CD8-positive, alpha-beta T cell (primary cell): ENCODE measurements at regions of chr2 and their contacts with region 1.

Region 1: DNA sequence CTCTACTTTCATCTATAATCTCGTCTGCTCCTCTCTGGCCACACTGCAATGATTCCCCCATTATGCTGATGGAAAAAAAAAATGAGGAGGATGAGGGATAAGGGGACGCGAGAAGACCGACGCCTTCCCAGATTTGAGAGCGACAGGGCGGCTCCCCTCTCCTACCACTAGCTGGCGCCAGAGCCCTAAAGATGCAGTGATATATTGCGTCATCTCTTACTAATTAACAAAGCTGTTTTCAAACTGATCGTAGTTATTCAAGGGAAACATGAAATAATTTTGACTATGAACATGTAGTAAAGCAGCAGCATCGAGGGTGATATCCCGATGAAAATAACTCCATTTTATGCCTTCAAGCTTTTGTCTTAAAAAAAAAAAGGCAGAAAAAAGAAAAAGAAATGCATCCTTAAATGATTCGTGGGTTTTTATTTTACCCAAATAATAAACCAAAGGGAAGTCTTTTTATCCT is 48.0 kb upstream of the HNRNPA3 start:
- DNase-seq: peak; percentile 58 to 87 (median 82)
- ATAC-seq: peak; percentile 74
- H3K4me3 ChIP-seq: peak overlapping the region; percentile 29 to 36
- H3K4me3 Mint-ChIP-seq: no peak overlapping the region
- H3K27ac ChIP-seq: peak overlapping the region in 1 of 2 experiments; percentile 28
- H3K27ac Mint-ChIP-seq: no peak overlapping the region
- H3K4me1 ChIP-seq: peaks cover 23% of the 10 kb centered on the region
- H3K4me1 Mint-ChIP-seq: peaks cover 14% of the 10 kb centered on the region
- H3K27me3 ChIP-seq: no peaks in the 10 kb centered on the region
- H3K27me3 Mint-ChIP-seq: peaks cover 3% of the 10 kb centered on the region
- CTCF ChIP-seq: peak; percentile 100

Region 2: DNA sequence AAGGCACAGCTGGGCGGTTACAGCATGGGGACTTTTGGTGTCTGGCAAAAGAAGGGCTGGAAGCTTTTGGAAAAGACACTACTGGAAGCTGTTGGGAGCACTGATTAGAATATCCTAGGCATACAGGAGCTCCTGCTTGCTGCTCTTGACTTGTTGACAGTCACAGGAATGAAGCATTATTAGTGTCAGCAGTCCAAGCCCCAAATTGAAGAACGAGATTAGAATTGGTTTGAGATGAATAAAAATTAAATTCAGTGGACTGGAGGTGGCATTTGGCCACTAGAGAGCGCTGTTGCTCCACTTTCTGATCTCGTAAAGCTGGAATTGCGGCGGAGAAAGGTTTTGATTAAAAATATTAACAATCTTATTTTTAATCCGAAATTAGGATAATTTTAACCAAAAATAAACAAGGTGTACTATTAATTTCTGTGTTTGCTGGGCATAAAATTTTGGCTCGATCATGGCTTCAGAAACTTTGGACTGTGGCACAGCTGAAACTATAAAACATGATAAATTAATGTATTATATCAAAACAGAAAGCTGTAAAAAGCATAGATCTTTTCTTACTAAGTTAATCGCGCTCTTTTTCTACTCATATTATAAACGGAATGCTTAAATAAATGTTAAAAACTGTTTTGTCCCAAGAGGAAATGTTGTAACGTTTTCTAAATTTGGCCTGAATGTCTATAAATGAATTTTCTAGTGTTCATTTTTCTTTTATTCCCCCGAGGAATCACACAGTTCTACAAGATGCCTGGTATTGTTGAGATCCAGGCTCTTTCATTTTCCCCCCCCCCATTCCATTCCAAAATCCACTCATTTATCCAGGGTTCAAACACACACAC is 1037.5 kb before region 1 on chr2:
- CTCF ChIA-PET with region 1: interaction called, 8 read pairs
- POLR2A ChIA-PET with region 1: no interaction called
- intact Hi-C with region 1: loop called (anchors 1 kb)
- DNase-seq: peak; percentile 36 to 81 (median 74)
- ATAC-seq: no peak
- H3K4me3 ChIP-seq: no peak overlapping the region
- H3K4me3 Mint-ChIP-seq: no peak overlapping the region
- H3K27ac ChIP-seq: no peak overlapping the region
- H3K27ac Mint-ChIP-seq: no peak overlapping the region
- H3K4me1 ChIP-seq: peaks cover 36% of the 10 kb centered on the region
- H3K4me1 Mint-ChIP-seq: peaks cover 31% of the 10 kb centered on the region
- H3K27me3 ChIP-seq: peaks cover 68 to 72% of the 10 kb centered on the region in 2 experiments
- H3K27me3 Mint-ChIP-seq: peaks cover 71% of the 10 kb centered on the region
- CTCF ChIP-seq: peak; percentile 99

Region 3: GRCh38 chr2:177195194-177195593 is 30.6 kb after region 1 on chr2:
- CTCF ChIA-PET with region 1: interaction called, 21 read pairs
- POLR2A ChIA-PET with region 1: no interaction called
- intact Hi-C with region 1: no loop called
- DNase-seq: peak in 1 of 9 experiments; percentile 30
- ATAC-seq: no peak
- H3K4me3 ChIP-seq: no peak overlapping the region
- H3K4me3 Mint-ChIP-seq: no peak overlapping the region
- H3K27ac ChIP-seq: no peak overlapping the region
- H3K27ac Mint-ChIP-seq: no peak overlapping the region
- H3K4me1 ChIP-seq: no peaks in the 10 kb centered on the region
- H3K4me1 Mint-ChIP-seq: no peaks in the 10 kb centered on the region
- H3K27me3 ChIP-seq: no peaks in the 10 kb centered on the region
- H3K27me3 Mint-ChIP-seq: no peaks in the 10 kb centered on the region
- CTCF ChIP-seq: no peak

Region 4: GRCh38 chr2:177229448-177230242 is 65.0 kb after region 1 on chr2:
- CTCF ChIA-PET with region 1: interaction called, 18 read pairs
- POLR2A ChIA-PET with region 1: no interaction called
- intact Hi-C with region 1: no loop called
- DNase-seq: no peak
- ATAC-seq: no peak
- H3K4me3 ChIP-seq: no peak overlapping the region
- H3K4me3 Mint-ChIP-seq: no peak overlapping the region
- H3K27ac ChIP-seq: no peak overlapping the region
- H3K27ac Mint-ChIP-seq: peak overlapping the region; percentile 79
- H3K4me1 ChIP-seq: no peaks in the 10 kb centered on the region
- H3K4me1 Mint-ChIP-seq: peaks cover 41% of the 10 kb centered on the region
- H3K27me3 ChIP-seq: no peaks in the 10 kb centered on the region
- H3K27me3 Mint-ChIP-seq: no peaks in the 10 kb centered on the region
- CTCF ChIP-seq: no peak

Region 5: GRCh38 chr2:177306550-177306949 is 141.9 kb after region 1 on chr2:
- CTCF ChIA-PET with region 1: interaction called, 24 read pairs
- POLR2A ChIA-PET with region 1: interaction called, 9 read pairs
- intact Hi-C with region 1: no loop called
- DNase-seq: no peak
- ATAC-seq: no peak
- H3K4me3 ChIP-seq: no peak overlapping the region
- H3K4me3 Mint-ChIP-seq: no peak overlapping the region
- H3K27ac ChIP-seq: no peak overlapping the region
- H3K27ac Mint-ChIP-seq: no peak overlapping the region
- H3K4me1 ChIP-seq: peaks cover 17% of the 10 kb centered on the region
- H3K4me1 Mint-ChIP-seq: peaks cover 32% of the 10 kb centered on the region
- H3K27me3 ChIP-seq: no peaks in the 10 kb centered on the region
- H3K27me3 Mint-ChIP-seq: no peaks in the 10 kb centered on the region
- CTCF ChIP-seq: no peak

Region 6: DNA sequence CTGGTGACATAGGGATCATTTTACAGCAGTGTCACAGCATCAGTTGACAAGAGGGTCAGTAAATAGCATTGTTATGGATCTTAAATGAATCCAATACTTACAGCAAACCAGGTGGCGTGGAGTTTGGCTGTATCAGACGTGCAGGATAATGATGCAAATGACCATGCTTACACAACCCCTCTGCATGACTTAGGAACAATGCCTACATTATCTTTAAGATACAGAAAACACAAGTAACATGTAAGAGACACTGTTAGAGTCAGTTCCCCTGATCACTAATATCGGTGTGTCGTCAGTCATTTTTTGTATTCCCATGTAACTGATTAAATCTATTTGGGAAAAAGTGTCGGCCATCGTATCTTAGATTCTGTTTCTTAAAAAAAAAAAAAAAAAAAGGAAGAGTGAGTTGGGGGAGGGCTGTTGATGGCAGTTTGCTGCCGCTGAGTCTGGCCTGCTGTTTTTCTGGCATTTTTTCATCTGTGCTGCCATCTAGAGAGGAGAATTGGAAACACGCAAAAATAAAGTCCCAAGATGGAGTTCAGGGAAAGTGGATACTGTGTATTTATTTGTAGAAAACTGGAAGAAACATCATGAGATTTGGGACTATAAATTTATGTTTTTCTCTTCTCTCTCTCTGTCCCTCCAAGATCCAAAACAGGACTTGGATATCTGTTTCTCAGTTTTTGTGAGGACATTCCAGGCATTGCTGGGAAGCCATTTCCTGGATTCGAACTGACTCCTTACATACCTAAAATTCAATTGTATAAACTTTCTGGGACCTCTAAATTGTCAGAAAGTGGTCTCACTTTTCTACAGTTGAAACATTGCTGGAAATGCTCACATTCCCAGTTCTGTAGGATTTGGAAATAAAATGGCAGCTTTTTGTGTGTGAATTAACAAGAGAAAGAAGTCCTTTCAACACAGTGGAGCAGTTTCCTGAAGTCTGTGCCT is 167.7 kb after region 1 on chr2:
- CTCF ChIA-PET with region 1: interaction called, 156 read pairs
- POLR2A ChIA-PET with region 1: interaction called, 4 read pairs
- intact Hi-C with region 1: loop called (anchors 1 kb)
- DNase-seq: peak in 8 of 9 experiments; percentile 6 to 79 (median 33)
- ATAC-seq: peak; percentile 87
- H3K4me3 ChIP-seq: no peak overlapping the region
- H3K4me3 Mint-ChIP-seq: no peak overlapping the region
- H3K27ac ChIP-seq: no peak overlapping the region
- H3K27ac Mint-ChIP-seq: no peak overlapping the region
- H3K4me1 ChIP-seq: peaks cover 6% of the 10 kb centered on the region
- H3K4me1 Mint-ChIP-seq: peaks cover 10% of the 10 kb centered on the region
- H3K27me3 ChIP-seq: no peaks in the 10 kb centered on the region
- H3K27me3 Mint-ChIP-seq: no peaks in the 10 kb centered on the region
- CTCF ChIP-seq: peak; percentile 73

Region 7: GRCh38 chr2:177604271-177605065 is 439.9 kb after region 1 on chr2:
- CTCF ChIA-PET with region 1: interaction called, 3 read pairs
- POLR2A ChIA-PET with region 1: no interaction called
- intact Hi-C with region 1: loop called (anchors 2 to 5 kb)
- DNase-seq: peak in 2 of 9 experiments; percentile 30 to 45
- ATAC-seq: no peak
- H3K4me3 ChIP-seq: no peak overlapping the region
- H3K4me3 Mint-ChIP-seq: no peak overlapping the region
- H3K27ac ChIP-seq: no peak overlapping the region
- H3K27ac Mint-ChIP-seq: no peak overlapping the region
- H3K4me1 ChIP-seq: no peaks in the 10 kb centered on the region
- H3K4me1 Mint-ChIP-seq: no peaks in the 10 kb centered on the region
- H3K27me3 ChIP-seq: no peaks in the 10 kb centered on the region
- H3K27me3 Mint-ChIP-seq: peaks cover 9% of the 10 kb centered on the region
- CTCF ChIP-seq: peak; percentile 38